Right ventricle myocardium inferior (tissue), 1 donor: ENCODE measurements at regions of chr13 and their contacts with region 1.

Region 1: DNA sequence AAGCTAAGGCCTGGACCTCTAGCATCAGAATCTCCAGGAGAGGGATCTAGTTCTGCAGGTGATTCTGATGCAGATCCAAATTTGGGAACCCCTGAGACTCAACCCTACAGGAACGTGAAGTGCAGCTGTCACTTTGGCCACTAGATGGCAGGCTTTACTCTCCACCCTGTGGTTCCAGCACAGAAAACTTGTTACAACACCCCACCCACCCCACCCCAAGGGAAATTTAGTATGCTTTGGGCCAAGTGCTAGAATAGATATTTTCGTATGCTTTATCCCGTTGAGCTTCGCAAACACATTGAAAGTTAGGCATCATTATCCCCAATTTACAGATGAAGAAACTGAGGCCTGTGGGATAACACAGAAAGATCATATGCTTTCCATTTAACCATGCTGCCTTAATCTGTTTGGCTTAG is 232.0 kb downstream of the B3GLCT start:
- DNase-seq: no peak
- ATAC-seq: peak; percentile 70

Region 2: GRCh38 chr13:31495336-31495735 is 63.6 kb after region 1 on chr13:
- intact Hi-C with region 1: no loop called
- DNase-seq: no peak
- ATAC-seq: no peak

Region 3: DNA sequence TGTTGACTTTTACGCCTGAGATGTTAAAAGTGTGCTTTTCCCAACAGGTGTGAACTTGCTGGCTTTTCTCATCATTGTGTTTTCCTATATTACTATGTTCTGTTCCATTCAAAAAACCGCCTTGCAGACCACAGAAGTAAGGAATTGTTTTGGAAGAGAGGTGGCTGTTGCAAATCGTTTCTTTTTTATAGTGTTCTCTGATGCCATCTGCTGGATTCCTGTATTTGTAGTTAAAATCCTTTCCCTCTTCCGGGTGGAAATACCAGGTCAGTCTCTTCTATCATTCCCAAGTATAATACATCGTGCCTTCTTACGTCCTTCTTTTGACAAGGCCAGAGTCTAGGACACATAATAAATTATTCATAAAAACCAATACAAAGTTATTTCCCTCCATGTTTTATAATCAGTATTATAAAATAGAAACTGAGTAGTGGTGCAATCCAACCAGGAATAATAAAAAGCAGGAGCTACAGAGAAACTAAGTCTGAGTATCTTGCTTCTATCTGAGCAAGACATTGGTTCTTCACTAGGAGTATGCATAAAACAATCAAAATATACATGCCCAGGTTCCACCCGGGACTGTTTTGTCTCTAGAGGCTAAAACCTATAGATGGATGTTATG is 365.5 kb after region 1 on chr13:
- intact Hi-C with region 1: loop called (anchors 5 kb)
- DNase-seq: no peak
- ATAC-seq: no peak

Region 4: GRCh38 chr13:31951215-31951678 is 519.5 kb after region 1 on chr13:
- intact Hi-C with region 1: no loop called
- DNase-seq: peak; percentile 90
- ATAC-seq: peak; percentile 86

Region 5: DNA sequence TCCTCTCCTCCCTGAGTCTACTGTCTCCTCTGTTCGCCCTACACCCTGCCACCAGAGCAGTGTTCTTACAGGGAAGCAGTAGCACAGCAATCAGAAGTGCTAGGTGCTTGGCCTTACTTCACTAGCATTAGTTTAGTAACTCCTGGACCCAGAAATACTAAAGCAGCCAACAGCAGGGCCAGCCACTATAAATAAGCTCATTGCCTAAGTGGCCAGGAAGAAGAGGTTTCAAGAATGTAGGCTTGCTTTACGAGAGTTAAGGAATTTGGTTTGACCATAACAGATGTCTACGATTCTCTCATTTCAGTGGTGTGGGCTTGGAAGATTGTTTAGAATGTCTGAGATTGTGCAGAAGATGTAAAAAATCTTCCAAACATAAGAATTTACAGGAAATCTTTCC is 780.1 kb after region 1 on chr13:
- intact Hi-C with region 1: no loop called
- DNase-seq: no peak
- ATAC-seq: peak; percentile 74